Heart right ventricle (tissue), 16 donors: ENCODE measurements at regions of chr4 and their contacts with region 1.

Region 1: DNA sequence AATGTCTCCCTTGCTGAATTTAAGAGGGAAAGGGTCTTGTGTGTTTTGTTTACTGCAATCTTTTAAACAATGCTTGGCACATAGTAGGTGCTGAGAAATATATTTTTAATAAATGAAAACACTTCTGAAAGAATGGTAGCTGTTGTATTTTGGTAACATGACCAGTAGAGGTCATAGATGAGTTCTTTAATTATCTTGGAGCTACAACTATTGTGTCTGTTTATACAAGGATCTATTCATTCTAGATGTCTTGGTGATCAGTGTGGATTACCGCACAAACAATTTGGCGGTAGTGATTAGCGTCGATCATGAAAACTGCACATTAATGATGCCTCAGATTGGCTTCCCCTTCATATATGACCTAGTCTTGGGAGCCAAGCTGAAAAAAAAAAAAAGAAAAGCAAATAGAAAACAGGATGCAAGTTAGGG is 21.4 kb upstream of the SCRG1 start:
- DNase-seq: no peak
- ATAC-seq: peak in 3 of 8 donors; percentile 21 to 56 (median 50)
- H3K4me3 ChIP-seq: peak overlapping the region in 1 of 10 donors; percentile 21
- H3K27ac ChIP-seq: no peak overlapping the region
- H3K4me1 ChIP-seq: peaks cover 0 to 42% (median 0%) of the 10 kb centered on the region in 9 donors
- H3K27me3 ChIP-seq: no peaks in the 10 kb centered on the region
- CTCF ChIP-seq: peak in 8 of 9 donors; percentile 42 to 69 (median 60)

Region 2: DNA sequence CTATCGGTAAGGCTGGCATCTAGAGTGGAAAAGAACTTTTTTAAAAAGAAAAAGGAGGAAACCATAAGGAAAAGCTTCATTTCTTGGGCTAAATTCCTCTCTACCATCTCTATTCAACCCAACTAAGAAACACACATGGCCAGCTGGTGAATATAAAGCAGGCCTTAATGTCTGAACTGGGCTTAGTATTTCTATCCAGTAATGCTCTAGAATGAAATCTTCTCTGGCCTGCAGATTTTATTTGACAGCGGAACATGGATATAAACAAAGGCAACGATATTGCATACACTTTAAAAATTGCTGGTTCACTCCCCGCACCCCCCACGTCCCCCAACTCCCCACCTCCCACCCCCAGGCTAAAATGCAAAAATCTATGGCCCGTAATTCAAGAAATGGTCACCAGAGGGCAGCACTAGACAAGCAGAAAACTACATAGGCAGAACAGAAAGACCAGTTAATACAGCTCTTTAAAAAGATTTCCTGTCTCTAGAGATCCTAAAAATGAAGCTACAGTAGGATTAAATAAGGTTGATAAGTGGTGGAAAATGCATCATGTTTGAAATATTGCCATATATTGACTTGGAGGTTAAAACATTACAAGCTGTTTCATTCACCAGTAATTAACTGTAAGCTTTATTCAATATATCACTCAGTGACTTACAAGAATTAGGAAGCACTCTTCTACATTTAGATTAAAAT is 407.0 kb before region 1 on chr4:
- intact Hi-C with region 1: loop called in 5 of 10 experiments (anchors 5 to 10 kb)
- DNase-seq: peak in 1 of 2 donors; percentile 38
- ATAC-seq: peak in 7 of 8 donors; percentile 31 to 80 (median 67)
- H3K4me3 ChIP-seq: no peak overlapping the region
- H3K27ac ChIP-seq: peak overlapping the region in 1 of 10 donors; percentile 22
- H3K4me1 ChIP-seq: peaks cover 0 to 12% (median 0%) of the 10 kb centered on the region in 9 donors
- H3K27me3 ChIP-seq: no peaks in the 10 kb centered on the region
- CTCF ChIP-seq: peak; percentile 48 to 77 (median 70)

Region 3: DNA sequence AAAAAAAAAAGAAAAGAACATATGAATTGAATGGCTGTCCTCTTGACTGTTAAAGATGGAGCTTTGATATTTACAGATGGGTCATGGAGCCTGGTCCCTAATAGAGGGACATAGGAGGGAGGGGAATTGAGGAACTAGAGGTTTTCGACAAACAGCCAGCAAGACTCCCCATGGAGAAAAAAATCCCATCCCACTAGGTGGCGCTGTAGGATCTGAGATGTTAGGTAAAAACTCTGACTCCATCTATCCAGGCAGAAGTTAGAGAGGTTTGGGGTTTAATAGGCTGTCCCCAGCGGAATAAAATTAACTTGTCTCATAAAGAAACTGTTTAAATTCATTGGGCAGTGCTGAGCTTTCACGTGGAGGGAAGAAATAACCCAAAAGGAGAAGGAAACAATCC is 132.0 kb before region 1 on chr4:
- intact Hi-C with region 1: loop called in 1 of 10 experiments (anchors 10 kb)
- DNase-seq: peak in 1 of 2 donors; percentile 80
- ATAC-seq: peak in 7 of 8 donors; percentile 33 to 79 (median 63)
- H3K4me3 ChIP-seq: peak overlapping the region in 2 of 10 donors; percentile 33 to 37
- H3K27ac ChIP-seq: no peak overlapping the region
- H3K4me1 ChIP-seq: peaks cover 0 to 9% (median 0%) of the 10 kb centered on the region in 9 donors
- H3K27me3 ChIP-seq: no peaks in the 10 kb centered on the region
- CTCF ChIP-seq: peak; percentile 22 to 78 (median 63)

Region 4: GRCh38 chr4:173370477-173371291 is 49.7 kb before region 1 on chr4 and contains the start of gene SAP30:
- intact Hi-C with region 1: loop called in 3 of 10 experiments (anchors 2 to 5 kb)
- DNase-seq: peak; percentile 99
- ATAC-seq: peak; percentile 95 to 99 (median 96)
- H3K4me3 ChIP-seq: peak within 1 kb of the TSS; percentile 64 to 94 (median 80)
- H3K27ac ChIP-seq: peak within 1 kb of the TSS; percentile 89 to 98 (median 95)
- H3K4me1 ChIP-seq: peaks cover 0 to 60% (median 39%) of the 10 kb centered on the region in 9 donors
- H3K27me3 ChIP-seq: no peaks in the 10 kb centered on the region
- CTCF ChIP-seq: no peak
- total RNA-seq, gene SAP30: 9.2 to 22.2 (median 12.3) TPM

Region 5: DNA sequence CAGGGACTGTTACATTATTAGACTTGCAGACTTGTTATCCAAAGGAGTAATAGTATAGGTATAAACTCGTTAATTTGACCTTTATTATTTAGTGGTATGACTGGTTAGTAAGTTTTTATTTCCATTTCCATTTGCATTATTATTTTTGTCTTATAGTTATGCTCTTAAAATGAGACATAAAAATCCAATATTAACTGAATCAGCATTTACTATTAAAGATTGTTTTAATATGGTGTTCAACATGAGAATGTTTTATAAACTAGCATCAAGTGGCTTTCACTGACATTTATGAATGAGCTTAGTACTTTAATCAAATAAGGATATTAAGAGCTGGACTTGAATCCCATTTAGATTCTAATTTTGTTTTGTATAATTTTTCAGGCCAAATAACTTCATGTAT is 337.8 kb after region 1 on chr4:
- intact Hi-C with region 1: loop called in 1 of 10 experiments (anchors 5 kb)
- DNase-seq: no peak
- ATAC-seq: no peak
- H3K4me3 ChIP-seq: no peak overlapping the region
- H3K27ac ChIP-seq: no peak overlapping the region
- H3K4me1 ChIP-seq: peaks cover 0 to 17% (median 0%) of the 10 kb centered on the region in 9 donors
- H3K27me3 ChIP-seq: no peaks in the 10 kb centered on the region
- CTCF ChIP-seq: no peak